IMR-90 (cell line): ENCODE measurements at regions of chr12 and their contacts with region 1.

Region 1: DNA sequence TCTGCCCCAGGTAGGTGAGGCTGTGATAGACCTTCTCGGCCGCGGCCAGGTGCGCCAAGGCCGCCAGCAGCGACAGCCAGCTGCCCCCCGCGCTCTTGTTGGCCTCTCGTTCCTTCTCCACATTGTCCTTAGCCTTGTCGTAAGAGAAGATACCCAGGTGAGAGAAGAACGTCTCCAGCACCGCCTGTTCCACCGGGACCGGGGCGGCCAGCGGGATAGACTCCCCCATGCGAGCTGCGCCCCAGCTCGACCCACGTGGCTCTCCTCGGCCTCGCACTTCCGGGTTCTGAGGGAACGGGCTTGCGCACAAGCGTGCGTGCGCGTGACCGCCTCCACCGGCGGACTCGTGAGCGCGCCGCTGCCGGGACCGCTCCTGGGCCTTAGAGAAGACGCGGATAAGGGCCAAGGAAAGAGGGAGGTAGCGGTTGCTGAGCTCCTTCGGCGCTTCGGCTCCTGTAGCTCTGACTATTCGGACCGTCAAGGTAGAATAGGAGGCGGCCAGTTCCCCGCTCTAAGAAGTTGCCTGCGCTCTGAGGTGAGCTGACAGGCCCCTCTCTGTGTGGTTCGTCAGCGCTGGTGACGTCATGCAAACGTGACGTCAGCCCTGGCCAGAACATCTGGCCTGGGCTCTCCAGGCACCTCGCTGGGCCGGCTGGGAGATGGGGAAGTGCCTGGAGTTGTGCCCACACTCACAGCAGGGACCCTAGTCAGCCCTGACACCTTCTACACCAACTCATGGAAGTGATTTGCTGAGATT is at the start of gene KICS2:
- DNase-seq: peak; percentile 93
- ATAC-seq: peak; percentile 93
- H3K4me3 ChIP-seq: peak within 1 kb of the TSS; percentile 67
- H3K27ac ChIP-seq: peak within 1 kb of the TSS; percentile 77
- H3K4me1 ChIP-seq: no peaks in the 10 kb centered on the region; the same call in 1 of the 2 replicates
- H3K27me3 ChIP-seq: no peaks in the 10 kb centered on the region
- CTCF ChIP-seq: 0 out of 2 replicates have a peak, but pooled peaks have one; percentile 2
- POLR2A ChIP-seq: peak; percentile 87
- RAD21 ChIP-seq: no peak; the same call in none of the 2 replicates
- total RNA-seq, gene KICS2: 5.6 and 6.1 TPM in 2 replicates

Region 2: DNA sequence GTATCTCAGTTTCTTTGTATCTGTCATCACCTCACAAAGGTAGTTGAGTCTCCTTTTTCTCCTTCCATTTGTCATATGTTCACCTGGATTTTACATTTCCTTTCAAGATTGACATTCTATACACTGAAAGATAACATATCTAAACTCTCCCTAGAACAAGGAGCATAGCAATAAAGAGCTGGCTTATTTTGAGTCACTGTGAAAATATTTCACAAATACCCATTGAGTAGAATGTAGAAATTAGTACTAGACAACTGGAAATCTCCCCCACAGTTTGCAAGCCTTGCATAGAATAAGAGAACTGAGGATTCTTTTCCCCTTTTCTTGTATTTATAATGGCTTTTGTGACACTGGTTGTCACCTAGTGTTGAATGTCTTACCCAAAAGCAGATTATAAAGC is 111.3 kb before region 1 on chr12:
- CTCF ChIA-PET with region 1: no interaction called
- POLR2A ChIA-PET with region 1: no interaction called
- dilution Hi-C with region 1: no loop called
- in situ Hi-C with region 1: no loop called
- intact Hi-C with region 1: loop called (anchors 10 kb)
- DNase-seq: peak; percentile 19
- ATAC-seq: peak; percentile 70
- H3K4me3 ChIP-seq: no peak overlapping the region
- H3K27ac ChIP-seq: no peak overlapping the region
- H3K4me1 ChIP-seq: peaks cover 6% of the 10 kb centered on the region
- H3K27me3 ChIP-seq: no peaks in the 10 kb centered on the region
- CTCF ChIP-seq: no peak
- POLR2A ChIP-seq: no peak
- RAD21 ChIP-seq: no peak

Region 3: DNA sequence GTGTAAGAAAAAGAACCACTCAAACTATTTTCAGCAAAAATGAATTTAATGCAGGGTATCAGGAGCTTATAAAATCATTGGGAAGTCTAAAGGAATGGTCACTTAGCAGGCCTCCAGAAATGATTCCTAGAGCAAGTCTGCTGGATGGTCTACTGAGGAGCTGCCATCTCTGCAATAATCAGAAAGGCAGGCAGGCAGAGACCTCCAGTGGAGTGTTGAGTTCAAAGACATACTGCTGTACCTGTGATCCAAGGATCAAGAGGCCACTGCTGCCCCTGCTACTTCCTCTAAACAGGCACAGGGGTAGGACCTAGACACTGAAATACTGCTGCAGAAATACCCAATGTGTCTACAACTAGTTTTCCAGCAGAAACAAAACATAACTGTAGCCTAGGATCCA is 14.4 kb after region 1 on chr12:
- CTCF ChIA-PET with region 1: interaction called, 9 read pairs
- POLR2A ChIA-PET with region 1: no interaction called
- dilution Hi-C with region 1: no loop called
- in situ Hi-C with region 1: no loop called
- intact Hi-C with region 1: loop called (anchors 1 kb)
- DNase-seq: peak; percentile 19
- ATAC-seq: peak; percentile 54; the same call in 1 of the 2 replicates
- H3K4me3 ChIP-seq: no peak overlapping the region
- H3K27ac ChIP-seq: no peak overlapping the region
- H3K4me1 ChIP-seq: peaks cover 2% of the 10 kb centered on the region
- H3K27me3 ChIP-seq: no peaks in the 10 kb centered on the region
- CTCF ChIP-seq: peak; percentile 39
- POLR2A ChIP-seq: no peak
- RAD21 ChIP-seq: peak; percentile 41

Region 4: DNA sequence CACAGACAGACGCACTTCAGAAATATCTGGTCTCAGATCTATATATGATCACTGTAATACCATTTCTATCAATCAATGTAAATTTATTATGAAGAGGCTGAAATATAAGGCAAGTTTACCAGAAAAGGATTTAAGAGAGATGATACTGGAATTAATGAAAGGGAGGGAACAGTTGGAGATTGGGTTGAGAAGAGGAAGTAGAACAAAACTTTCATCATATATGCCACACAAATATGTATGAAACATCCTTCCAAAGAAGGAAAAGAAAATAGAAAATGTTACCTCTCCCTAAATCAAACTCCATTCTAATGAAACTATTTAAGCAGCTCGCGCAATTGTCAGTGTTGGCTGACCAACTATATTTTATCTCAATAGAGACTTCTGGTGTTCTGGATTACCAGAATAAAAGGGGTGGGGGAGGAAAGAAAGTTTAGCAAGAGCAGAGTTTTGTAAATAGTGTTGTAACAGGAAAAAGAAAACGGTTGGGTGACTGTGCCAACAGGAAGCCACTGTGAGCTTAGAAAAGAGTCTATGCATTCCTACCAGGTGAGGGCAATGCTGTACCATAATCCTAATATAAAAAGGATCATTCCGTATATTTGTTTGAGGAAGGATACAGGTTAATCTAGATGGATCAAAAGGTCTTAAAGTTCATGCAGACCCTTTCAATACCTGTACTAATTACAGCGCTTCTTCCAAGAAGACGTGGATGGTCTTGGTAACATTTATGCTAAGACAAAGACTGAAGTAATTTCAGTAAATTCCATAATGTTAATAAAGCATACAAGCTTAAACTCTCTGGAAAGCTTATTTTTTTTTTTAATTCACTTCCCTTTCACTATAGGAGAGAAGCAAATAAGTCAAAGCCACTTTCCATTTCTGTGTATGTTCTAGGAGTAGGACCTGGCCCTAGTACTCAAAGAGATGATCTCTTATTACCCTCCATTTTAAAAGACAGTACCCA is 1922.9 kb after region 1 on chr12:
- CTCF ChIA-PET with region 1: no interaction called
- POLR2A ChIA-PET with region 1: no interaction called
- dilution Hi-C with region 1: no loop called
- in situ Hi-C with region 1: no loop called
- intact Hi-C with region 1: loop called (anchors 10 kb)
- DNase-seq: peak; percentile 75
- ATAC-seq: peak; percentile 75
- H3K4me3 ChIP-seq: no peak overlapping the region
- H3K27ac ChIP-seq: no peak overlapping the region
- H3K4me1 ChIP-seq: no peaks in the 10 kb centered on the region
- H3K27me3 ChIP-seq: no peaks in the 10 kb centered on the region
- CTCF ChIP-seq: peak; percentile 70
- POLR2A ChIP-seq: no peak
- RAD21 ChIP-seq: peak; percentile 61